T-cell (primary cell): ENCODE measurements at regions of chr16 and their contacts with region 1.

Region 1: GRCh38 chr16:71484006-71484893 is 4.9 kb downstream of the ZNF19 start:
- DNase-seq: peak; percentile 59 to 93 (median 79)
- ATAC-seq: peak; percentile 86 to 90 (median 88)
- H3K4me3 ChIP-seq: peak overlapping the region; percentile 74 to 91
- H3K4me3 Mint-ChIP-seq: peak overlapping the region; percentile 81 to 86 (median 84)
- H3K27ac ChIP-seq: peak overlapping the region; percentile 95
- H3K27ac Mint-ChIP-seq: peak overlapping the region; percentile 79 to 94
- H3K4me1 ChIP-seq: peaks cover 7 to 10% of the 10 kb centered on the region in 2 experiments
- H3K4me1 Mint-ChIP-seq: peaks cover 14 to 20% (median 15%) of the 10 kb centered on the region in 3 donors
- H3K27me3 ChIP-seq: no peaks in the 10 kb centered on the region
- H3K27me3 Mint-ChIP-seq: no peaks in the 10 kb centered on the region

Region 2: DNA sequence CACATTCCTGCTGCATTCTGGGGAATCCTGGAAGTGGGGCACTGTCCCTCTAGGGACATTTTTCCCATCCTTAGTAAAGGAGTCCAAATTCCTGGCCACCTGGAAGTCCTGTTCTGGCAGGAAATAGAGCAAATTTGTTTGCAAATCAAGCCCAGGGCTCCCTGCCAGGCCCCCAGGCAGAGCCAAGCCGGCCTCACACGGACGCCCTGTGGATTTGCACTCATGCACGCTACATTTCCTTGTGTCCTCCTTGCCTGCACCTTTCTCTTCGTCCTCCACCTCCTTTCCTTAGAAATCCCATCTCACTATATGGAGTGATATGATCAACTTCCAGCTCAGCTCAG is 132.7 kb before region 1 on chr16:
- CTCF ChIA-PET with region 1: no interaction called
- POLR2A ChIA-PET with region 1: no interaction called
- DNase-seq: no peak
- ATAC-seq: no peak
- H3K4me3 ChIP-seq: no peak overlapping the region
- H3K4me3 Mint-ChIP-seq: no peak overlapping the region
- H3K27ac ChIP-seq: no peak overlapping the region
- H3K27ac Mint-ChIP-seq: no peak overlapping the region
- H3K4me1 ChIP-seq: no peaks in the 10 kb centered on the region
- H3K4me1 Mint-ChIP-seq: no peaks in the 10 kb centered on the region
- H3K27me3 ChIP-seq: peaks cover 0 to 24% of the 10 kb centered on the region in 2 experiments
- H3K27me3 Mint-ChIP-seq: peaks cover 7 to 8% of the 10 kb centered on the region in 2 donors

Region 3: GRCh38 chr16:71461686-71462648 is 22.3 kb before region 1 on chr16 and contains the start of gene ZNF23:
- CTCF ChIA-PET with region 1: interaction called in 1 of 2 experiments, 11 read pairs
- POLR2A ChIA-PET with region 1: interaction called, 7 to 18 read pairs
- DNase-seq: peak; percentile 37 to 84 (median 67)
- ATAC-seq: peak; percentile 96 to 98 (median 97)
- H3K4me3 ChIP-seq: peak within 1 kb of the TSS; percentile 93 to 96
- H3K4me3 Mint-ChIP-seq: peak within 1 kb of the TSS; percentile 84 to 96 (median 94)
- H3K27ac ChIP-seq: peak within 1 kb of the TSS; percentile 84
- H3K27ac Mint-ChIP-seq: peak within 1 kb of the TSS; percentile 89 to 94
- H3K4me1 ChIP-seq: peaks cover 6 to 10% of the 10 kb centered on the region in 2 experiments
- H3K4me1 Mint-ChIP-seq: peaks cover 5 to 29% (median 26%) of the 10 kb centered on the region in 3 donors
- H3K27me3 ChIP-seq: no peaks in the 10 kb centered on the region
- H3K27me3 Mint-ChIP-seq: no peaks in the 10 kb centered on the region
- total RNA-seq, gene ZNF23: 8.2 to 14.6 (median 10.9) TPM

Region 4: GRCh38 chr16:71564155-71564967 is 80.1 kb after region 1 on chr16:
- CTCF ChIA-PET with region 1: no interaction called
- POLR2A ChIA-PET with region 1: interaction called in 1 of 2 experiments, 17 read pairs
- DNase-seq: peak in 1 of 35 experiments; percentile 1
- ATAC-seq: no peak
- H3K4me3 ChIP-seq: peak overlapping the region; percentile 68 to 79
- H3K4me3 Mint-ChIP-seq: peak overlapping the region; percentile 84 to 94 (median 94)
- H3K27ac ChIP-seq: peak overlapping the region; percentile 72
- H3K27ac Mint-ChIP-seq: peak overlapping the region; percentile 96 to 97
- H3K4me1 ChIP-seq: peaks cover 9 to 13% of the 10 kb centered on the region in 2 experiments
- H3K4me1 Mint-ChIP-seq: peaks cover 16 to 21% (median 18%) of the 10 kb centered on the region in 3 donors
- H3K27me3 ChIP-seq: peaks cover 0 to under 1% of the 10 kb centered on the region in 2 experiments
- H3K27me3 Mint-ChIP-seq: no peaks in the 10 kb centered on the region